Astrocyte of the spinal cord (primary cell): ENCODE measurements at regions of chr1 and their contacts with region 1.

Region 1: GRCh38 chr1:206635080-206635977 is at the start of gene DYRK3:
- DNase-seq: peak; percentile 92
- H3K4me3 ChIP-seq: peak within 1 kb of the TSS; percentile 76
- CTCF ChIP-seq: no peak

Region 2: DNA sequence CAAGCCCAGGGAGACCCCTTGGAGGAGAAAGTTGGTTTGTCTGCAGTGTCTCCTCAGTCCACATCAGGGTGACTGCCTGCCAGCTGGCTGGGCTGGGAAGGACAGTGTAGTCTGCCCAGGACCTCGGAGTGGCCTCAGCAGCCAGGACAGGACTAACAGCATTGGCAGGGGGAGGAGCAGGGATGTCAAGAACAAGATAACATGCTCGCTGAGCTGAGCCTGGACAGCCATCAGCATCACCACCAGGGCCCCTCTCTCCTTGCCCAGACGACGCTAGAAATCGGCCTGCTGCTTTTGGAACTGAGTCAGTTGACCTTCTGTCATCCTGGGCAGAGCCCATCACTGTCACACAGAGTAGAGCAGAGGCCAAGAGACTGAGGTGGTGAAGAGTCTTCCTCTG is 1676.0 kb before region 1 on chr1:
- in situ Hi-C with region 1: no loop called
- DNase-seq: no peak
- H3K4me3 ChIP-seq: no peak overlapping the region
- CTCF ChIP-seq: no peak

Region 3: DNA sequence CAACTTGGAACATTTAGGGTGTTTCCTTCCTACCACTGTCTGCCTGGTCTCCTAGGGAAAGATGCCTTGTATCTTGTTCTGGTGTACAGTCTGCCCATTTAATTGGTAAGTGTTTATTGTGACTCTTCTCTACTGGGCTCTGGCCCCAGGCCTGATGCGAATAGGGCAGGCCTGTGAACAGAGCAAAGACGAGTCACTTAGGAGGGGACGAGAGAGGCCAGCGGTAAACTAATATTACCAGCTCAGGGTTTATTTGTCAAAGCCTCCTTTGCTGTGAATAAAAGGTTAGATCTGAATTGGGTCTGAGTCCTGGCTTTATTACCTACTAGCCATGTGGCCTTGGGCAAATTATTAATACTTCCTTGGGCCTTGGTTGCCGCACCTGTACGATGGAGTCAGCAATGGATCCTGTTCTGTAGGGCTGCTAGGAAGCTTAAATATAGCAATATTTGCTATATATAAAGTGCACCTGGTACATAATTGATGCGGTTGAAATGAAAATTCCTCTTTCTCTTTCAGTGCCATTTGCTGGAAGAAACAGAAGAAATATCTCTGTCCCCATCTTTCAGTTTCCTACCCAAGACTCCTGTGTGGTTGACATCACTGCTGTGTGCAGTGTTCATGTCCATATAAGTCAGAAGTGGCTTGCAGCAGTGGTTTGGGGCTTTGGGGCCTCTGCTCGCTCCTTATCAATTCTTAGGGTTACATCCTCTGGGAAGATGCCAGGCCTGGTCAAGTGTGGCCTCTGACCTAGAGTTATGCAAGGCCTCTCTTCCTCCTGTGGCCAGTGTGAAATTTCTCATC is 81.7 kb after region 1 on chr1:
- in situ Hi-C with region 1: no loop called
- DNase-seq: no peak
- H3K4me3 ChIP-seq: no peak overlapping the region
- CTCF ChIP-seq: no peak

Region 4: DNA sequence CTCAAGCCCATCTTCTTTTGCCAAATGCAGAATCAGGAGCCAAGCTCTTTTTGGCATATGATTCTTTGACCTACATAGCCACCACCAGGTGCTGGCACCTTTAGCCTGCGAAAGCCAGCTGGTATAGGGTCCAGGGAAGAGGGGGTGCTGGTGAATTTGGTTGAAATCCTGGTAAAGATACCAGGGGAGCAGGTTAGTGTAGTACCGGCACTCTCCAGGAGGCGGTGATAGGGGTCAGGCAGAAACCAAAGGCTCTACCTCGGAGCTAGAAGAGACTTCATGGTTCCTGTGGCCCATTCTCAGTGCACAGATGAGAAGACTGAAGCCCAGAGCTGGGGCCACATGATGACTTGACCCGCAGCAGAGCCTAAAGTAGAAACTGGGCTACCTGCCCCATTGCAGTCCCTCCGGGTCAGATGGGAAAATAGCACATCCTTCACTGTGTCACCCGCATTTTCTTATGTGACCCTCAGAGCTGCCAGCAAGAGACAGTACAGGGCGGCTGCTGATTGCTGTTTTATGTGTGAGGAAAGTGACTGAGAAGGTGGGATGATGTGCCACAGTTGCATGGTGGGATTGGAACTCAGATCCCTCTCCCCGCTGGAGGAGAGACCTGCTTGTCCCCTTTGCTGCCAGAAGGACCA is 99.3 kb after region 1 on chr1:
- in situ Hi-C with region 1: loop called (anchors 25 kb)
- DNase-seq: no peak
- H3K4me3 ChIP-seq: no peak overlapping the region
- CTCF ChIP-seq: peak; percentile 83